ENCODE measurements at regions of chr12 and their contacts with region 1.

Region 1: GRCh38 chr12:53379389-53380103 is 430 bp upstream of the SP1 start:
- DNase-seq: peak; percentile 100
- H3K4me3 Mint-ChIP-seq: no peak overlapping the region
- H3K27ac Mint-ChIP-seq: no peak overlapping the region
- H3K4me1 Mint-ChIP-seq: peaks cover 34% of the 10 kb centered on the region
- H3K27me3 Mint-ChIP-seq: no peaks in the 10 kb centered on the region

Region 2: GRCh38 chr12:53352331-53353256 is 27.0 kb before region 1 on chr12:
- intact Hi-C with region 1: loop called (anchors 1 kb)
- DNase-seq: peak; percentile 95
- H3K4me3 Mint-ChIP-seq: no peak overlapping the region
- H3K27ac Mint-ChIP-seq: peak overlapping the region; percentile 31
- H3K4me1 Mint-ChIP-seq: peaks cover 6% of the 10 kb centered on the region
- H3K27me3 Mint-ChIP-seq: no peaks in the 10 kb centered on the region

Region 3: DNA sequence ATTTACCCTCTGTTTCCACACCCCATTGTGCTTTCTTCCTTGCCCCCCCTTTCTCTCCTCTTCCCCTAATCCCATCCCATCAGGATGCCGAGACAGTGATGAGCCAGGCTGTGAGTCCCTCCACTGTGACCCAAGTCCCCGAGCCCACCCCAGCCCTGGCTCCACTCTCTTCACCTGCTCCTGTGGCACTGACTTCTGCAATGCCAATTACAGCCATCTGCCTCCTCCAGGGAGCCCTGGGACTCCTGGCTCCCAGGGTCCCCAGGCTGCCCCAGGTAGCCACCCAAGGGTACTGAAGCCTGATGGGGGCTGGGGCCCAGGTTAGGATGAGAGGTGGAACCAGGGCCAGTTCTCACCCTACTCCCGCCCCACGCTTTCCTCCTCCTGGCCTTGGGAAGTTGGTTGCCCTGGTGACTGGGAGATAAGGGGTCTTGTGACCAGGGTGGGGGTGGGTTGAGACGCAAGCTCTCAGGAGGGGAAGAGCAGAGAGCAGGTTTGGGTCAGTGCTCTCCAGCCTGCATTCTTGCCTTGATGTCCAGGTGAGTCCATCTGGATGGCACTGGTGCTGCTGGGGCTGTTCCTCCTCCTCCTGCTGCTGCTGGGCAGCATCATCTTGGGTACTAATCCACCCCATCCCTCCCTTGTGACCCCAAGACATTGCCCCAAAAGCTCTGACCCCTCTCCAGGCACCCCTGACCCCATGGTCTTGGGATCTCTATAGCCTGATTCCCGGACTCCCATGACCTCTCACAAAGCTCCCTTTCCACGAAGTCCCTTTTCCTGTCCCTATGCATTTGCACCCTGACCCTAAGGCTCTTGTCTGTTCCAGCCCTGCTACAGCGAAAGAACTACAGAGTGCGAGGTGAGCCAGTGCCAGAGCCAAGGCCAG is 45.3 kb after region 1 on chr12:
- intact Hi-C with region 1: loop called (anchors 1 kb)
- DNase-seq: no peak
- H3K4me3 Mint-ChIP-seq: no peak overlapping the region
- H3K27ac Mint-ChIP-seq: no peak overlapping the region
- H3K4me1 Mint-ChIP-seq: peaks cover 11% of the 10 kb centered on the region
- H3K27me3 Mint-ChIP-seq: no peaks in the 10 kb centered on the region

Region 4: DNA sequence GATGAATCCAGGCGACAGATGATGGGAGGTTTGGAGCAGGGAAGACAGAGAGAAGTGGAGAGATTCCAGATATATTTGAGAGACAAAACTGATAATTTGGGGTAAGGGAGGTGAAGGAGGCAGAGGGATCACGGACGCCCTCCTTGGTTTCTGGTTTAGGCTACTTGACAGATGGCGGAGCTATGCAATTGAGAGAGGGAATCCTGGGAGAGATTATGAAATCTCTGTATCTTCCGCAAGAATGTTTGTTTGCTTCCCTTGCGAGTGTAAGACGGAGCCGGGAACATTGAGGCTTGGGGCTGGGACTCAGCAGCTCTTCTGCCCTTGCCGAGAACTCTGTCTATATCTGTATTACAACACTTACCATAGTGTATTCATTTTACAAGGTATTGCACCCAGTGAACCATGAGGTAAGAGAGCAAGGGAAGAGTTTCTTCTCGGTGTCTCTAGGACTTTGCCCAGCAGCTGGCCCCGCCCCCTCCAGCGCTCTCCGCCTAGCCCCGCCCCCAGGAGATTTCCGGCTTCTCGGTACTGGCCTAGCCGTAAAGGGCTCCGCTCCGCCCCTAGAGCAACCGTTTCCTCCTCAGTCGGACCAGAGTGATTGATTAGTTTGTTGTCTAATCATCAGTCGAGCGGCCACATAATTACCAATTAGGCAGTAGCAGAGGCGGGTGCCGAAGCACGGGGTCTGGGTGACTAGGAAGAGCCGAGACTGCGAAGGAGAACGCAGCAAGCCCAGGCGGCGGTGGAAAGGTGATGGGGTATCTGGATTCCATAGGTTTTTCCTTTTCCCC is 61.7 kb after region 1 on chr12 and contains the start of gene PRR13:
- intact Hi-C with region 1: loop called (anchors 1 kb)
- DNase-seq: peak; percentile 99
- H3K4me3 Mint-ChIP-seq: peak within 1 kb of the TSS; percentile 97
- H3K27ac Mint-ChIP-seq: peak within 1 kb of the TSS; percentile 96
- H3K4me1 Mint-ChIP-seq: peaks cover 30% of the 10 kb centered on the region
- H3K27me3 Mint-ChIP-seq: no peaks in the 10 kb centered on the region
- total RNA-seq, gene PRR13: 201 and 211 TPM in 2 replicates

Region 5: DNA sequence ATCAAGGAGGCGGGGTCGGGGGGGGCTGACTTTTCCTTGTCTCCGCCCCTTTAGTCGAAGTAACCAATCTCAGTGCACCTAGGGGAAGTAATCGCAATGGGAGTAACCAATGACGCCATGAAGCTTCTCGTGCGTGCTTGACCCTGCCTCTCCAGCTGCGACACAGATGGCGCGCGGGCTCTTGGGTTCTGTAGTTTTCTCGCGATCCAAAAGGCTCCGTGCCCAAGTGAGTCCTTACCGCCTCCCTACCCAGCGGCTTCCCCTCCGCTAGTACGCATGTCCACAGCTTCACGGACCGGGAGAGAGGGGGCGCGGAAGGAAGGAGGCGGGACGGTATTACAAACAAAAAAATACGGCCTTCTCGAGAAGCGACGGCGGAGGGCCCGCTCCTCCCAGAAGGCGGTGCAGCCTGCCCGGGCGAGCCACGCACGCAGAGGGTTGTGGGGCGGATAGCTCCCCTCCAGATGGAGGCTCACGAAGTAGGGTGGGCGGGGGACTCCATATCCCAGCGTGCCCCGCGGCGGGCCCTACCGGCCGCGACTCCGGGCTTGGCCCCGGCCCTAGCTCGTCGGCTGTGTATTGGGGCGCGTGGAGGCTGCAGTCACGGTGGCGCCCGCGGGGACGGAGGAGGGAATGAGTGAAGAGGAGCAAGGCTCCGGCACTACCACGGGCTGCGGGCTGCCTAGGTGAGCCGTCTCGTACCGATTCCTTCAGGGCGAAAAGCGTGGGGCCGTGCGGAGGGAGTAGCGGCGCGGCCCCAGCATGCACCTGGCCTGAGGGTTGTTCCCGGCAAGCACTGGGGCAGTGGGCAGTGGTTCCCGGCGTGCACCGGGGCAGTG is 121.4 kb after region 1 on chr12 and contains the start of gene TARBP2:
- intact Hi-C with region 1: loop called (anchors 2 kb)
- DNase-seq: peak; percentile 98
- H3K4me3 Mint-ChIP-seq: peak within 1 kb of the TSS; percentile 93
- H3K27ac Mint-ChIP-seq: peak within 1 kb of the TSS; percentile 97
- H3K4me1 Mint-ChIP-seq: peaks cover 35% of the 10 kb centered on the region
- H3K27me3 Mint-ChIP-seq: no peaks in the 10 kb centered on the region
- total RNA-seq, gene TARBP2: 49.7 and 52.2 TPM in 2 replicates

Measured in activated CD4-positive, alpha-beta T cell treated with anti-CD3 and anti-CD28 coated beads, Interleukin-2, amount 10 ng/mL, durations not matched to agents 24 days and 14 days (primary cell).